Gastrocnemius medialis (tissue), 4 donors: ENCODE measurements at regions of chr21 and their contacts with region 1.

Region 1: DNA sequence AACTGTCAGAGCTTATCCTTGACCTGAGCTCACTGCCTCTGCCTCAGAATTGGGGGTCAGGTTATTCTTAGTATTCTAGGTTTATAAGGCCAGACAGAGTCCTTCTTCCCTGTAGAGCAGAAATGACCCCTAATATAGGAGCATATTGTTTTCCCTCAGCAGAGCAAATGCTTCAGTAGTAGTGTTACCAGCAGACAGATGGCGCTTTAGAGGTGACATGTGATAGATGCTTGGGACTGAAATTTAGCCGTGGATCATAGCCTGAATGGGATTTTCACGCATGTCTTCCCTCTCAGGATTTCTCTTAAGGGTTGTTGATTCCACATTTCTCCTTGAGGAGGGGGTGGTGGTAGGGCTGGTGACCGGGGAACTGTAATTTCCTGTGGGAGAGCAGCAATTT is 24.5 kb downstream of the ADARB1 start:
- DNase-seq: no peak
- ATAC-seq: no peak
- H3K4me3 ChIP-seq: no peak overlapping the region
- H3K27ac ChIP-seq: no peak overlapping the region
- H3K4me1 ChIP-seq: peaks cover 25 to 51% of the 10 kb centered on the region in 2 donors
- H3K27me3 ChIP-seq: no peaks in the 10 kb centered on the region
- CTCF ChIP-seq: peak in 3 of 5 experiments; percentile 18 to 43 (median 30)
- POLR2A ChIP-seq: no peak

Region 2: DNA sequence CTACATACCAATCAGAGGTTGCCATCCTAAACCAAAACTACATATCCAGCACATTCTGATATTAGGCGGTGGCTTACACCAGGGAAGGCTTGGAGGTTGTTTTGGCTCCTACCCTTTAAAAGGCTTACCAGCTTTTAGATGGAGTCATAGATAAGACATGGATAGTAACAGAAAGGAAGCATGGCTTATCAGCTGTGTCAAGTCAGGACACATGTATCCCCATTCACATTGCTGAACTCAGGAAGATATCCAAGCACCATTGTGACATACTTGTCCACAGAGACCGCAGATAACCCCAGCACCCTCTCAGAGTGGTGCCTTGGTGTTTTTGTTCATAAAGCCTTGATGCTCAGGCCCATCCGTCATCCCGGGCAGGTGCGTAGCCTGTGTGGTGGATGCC is 15.2 kb after region 1 on chr21:
- in situ Hi-C with region 1: no loop called
- intact Hi-C with region 1: loop called (anchors 2 kb)
- DNase-seq: no peak
- ATAC-seq: peak in 1 of 2 donors; percentile 42
- H3K4me3 ChIP-seq: no peak overlapping the region
- H3K27ac ChIP-seq: peak overlapping the region in 1 of 4 donors; percentile 5
- H3K4me1 ChIP-seq: peaks cover 30 to 39% of the 10 kb centered on the region in 2 donors
- H3K27me3 ChIP-seq: no peaks in the 10 kb centered on the region
- CTCF ChIP-seq: no peak
- POLR2A ChIP-seq: no peak

Region 3: GRCh38 chr21:45248893-45249381 is 150.1 kb after region 1 on chr21:
- in situ Hi-C with region 1: no loop called
- intact Hi-C with region 1: no loop called
- DNase-seq: no peak
- ATAC-seq: peak in 1 of 2 donors; percentile 50
- H3K4me3 ChIP-seq: peak overlapping the region in 2 of 4 donors; percentile 20 to 46
- H3K27ac ChIP-seq: no peak overlapping the region
- H3K4me1 ChIP-seq: peaks cover 3 to 8% of the 10 kb centered on the region in 2 donors
- H3K27me3 ChIP-seq: peaks cover 8 to 30% (median 13%) of the 10 kb centered on the region in 3 donors
- CTCF ChIP-seq: no peak
- POLR2A ChIP-seq: no peak